ENCODE measurements at regions of chr12 and their contacts with region 1.

Region 1: GRCh38 chr12:120116792-120117651 is 469 bp upstream of the RAB35 start:
- DNase-seq: peak; percentile 98
- H3K4me3 Mint-ChIP-seq: peak overlapping the region; percentile 88
- H3K27ac Mint-ChIP-seq: peak overlapping the region; percentile 89
- H3K4me1 Mint-ChIP-seq: peaks cover 67% of the 10 kb centered on the region
- H3K27me3 Mint-ChIP-seq: no peaks in the 10 kb centered on the region

Region 2: DNA sequence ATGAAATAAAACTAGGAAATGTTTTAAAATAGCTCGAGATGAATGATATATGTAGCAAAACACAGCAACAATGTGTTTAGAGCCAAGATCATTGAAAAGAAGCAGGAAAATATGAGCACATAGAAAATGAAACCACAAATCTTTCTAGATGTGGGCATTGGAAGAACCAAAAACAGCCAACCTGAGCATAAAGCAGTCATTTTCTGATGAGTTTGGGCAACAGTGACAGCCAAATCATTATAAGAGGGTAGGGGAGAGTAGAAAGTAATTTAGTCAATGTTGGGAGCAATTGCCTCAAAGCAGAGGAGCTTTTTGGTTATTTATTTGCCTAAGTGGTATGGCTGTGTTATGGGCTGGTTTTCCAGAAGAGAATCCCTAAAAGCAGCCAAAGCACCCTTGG is 136.8 kb before region 1 on chr12:
- CTCF ChIA-PET with region 1: no interaction called
- POLR2A ChIA-PET with region 1: interaction called, 10 read pairs
- intact Hi-C with region 1: loop called (anchors 1 kb)
- DNase-seq: no peak
- H3K4me3 Mint-ChIP-seq: peak overlapping the region; percentile 53
- H3K27ac Mint-ChIP-seq: peak overlapping the region; percentile 82
- H3K4me1 Mint-ChIP-seq: peaks cover 20% of the 10 kb centered on the region
- H3K27me3 Mint-ChIP-seq: peaks cover 2% of the 10 kb centered on the region

Region 3: DNA sequence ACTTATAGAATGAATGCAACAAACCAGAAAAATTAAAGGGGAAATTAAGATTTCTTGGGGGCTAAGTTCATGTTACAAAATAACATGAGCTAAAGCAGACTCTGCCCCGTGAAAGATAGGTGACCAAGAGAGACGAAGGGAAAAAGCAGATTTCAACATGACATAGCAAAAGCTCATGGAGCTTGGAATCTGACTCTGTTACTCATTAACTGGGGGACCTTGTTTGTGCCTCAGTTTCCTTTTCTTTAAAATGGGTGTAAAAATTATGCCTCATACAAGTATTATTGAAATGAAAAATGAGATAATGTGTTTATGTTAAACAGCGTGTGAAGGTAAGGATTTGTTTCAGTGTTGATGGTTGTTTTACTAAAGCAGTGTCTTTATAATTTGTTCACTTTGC is 116.5 kb before region 1 on chr12:
- CTCF ChIA-PET with region 1: no interaction called
- POLR2A ChIA-PET with region 1: no interaction called
- intact Hi-C with region 1: no loop called
- DNase-seq: no peak
- H3K4me3 Mint-ChIP-seq: no peak overlapping the region
- H3K27ac Mint-ChIP-seq: no peak overlapping the region
- H3K4me1 Mint-ChIP-seq: peaks cover 58% of the 10 kb centered on the region
- H3K27me3 Mint-ChIP-seq: no peaks in the 10 kb centered on the region

Region 4: GRCh38 chr12:120012067-120012621 is 104.9 kb before region 1 on chr12:
- CTCF ChIA-PET with region 1: interaction called, 9 read pairs
- POLR2A ChIA-PET with region 1: interaction called, 14 read pairs
- intact Hi-C with region 1: loop called (anchors 1 kb)
- DNase-seq: peak; percentile 88
- H3K4me3 Mint-ChIP-seq: peak overlapping the region; percentile 70
- H3K27ac Mint-ChIP-seq: peak overlapping the region; percentile 96
- H3K4me1 Mint-ChIP-seq: peaks cover 88% of the 10 kb centered on the region
- H3K27me3 Mint-ChIP-seq: peaks cover 2% of the 10 kb centered on the region

Region 5: GRCh38 chr12:120194534-120195395 is 77.7 kb after region 1 on chr12 and contains the start of gene GCN1:
- CTCF ChIA-PET with region 1: interaction called, 14 read pairs
- POLR2A ChIA-PET with region 1: interaction called, 131 read pairs
- intact Hi-C with region 1: no loop called
- DNase-seq: peak; percentile 91
- H3K4me3 Mint-ChIP-seq: peak within 1 kb of the TSS; percentile 91
- H3K27ac Mint-ChIP-seq: peak within 1 kb of the TSS; percentile 98
- H3K4me1 Mint-ChIP-seq: peaks cover 51% of the 10 kb centered on the region
- H3K27me3 Mint-ChIP-seq: no peaks in the 10 kb centered on the region
- total RNA-seq, gene GCN1: 121 TPM

Region 6: DNA sequence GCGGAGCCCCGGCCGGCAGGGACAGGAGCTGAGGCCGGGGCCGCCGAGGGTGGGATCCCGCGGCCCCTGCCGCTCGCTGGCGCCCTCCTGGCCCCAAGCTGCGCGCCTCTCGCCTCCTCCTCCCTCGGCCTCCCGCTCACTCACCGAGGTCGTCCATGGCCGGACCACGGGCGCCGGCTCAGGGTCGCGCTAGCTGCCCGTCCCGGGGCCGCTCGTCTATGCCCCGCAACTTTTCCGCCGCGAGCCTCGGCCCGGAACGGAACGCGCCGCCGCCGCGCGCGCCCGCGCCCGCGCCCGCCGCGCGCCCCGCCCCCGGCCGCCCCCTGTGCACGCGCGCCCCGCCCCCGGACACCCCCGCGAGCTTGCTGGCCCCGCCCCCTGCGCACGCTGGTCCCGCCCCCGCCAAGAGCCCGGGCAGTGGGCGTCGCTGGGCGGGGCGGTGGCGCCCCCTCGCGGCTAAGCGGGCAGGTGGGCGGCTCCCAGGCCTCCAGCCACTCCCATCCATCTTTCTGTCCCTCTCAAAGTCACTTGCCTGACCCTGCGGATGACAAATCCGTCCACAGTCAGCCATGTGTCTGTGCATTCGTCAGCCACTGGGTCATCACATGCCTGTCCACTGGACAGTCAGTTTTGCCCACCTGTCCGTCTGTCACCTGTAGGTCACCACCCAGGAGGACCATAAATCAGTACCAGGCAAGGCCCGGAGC is 148.6 kb after region 1 on chr12 and contains the start of gene PXN:
- CTCF ChIA-PET with region 1: interaction called, 3 read pairs
- POLR2A ChIA-PET with region 1: no interaction called
- intact Hi-C with region 1: loop called (anchors 5 kb)
- DNase-seq: peak; percentile 92
- H3K4me3 Mint-ChIP-seq: peak within 1 kb of the TSS; percentile 80
- H3K27ac Mint-ChIP-seq: peak within 1 kb of the TSS; percentile 66
- H3K4me1 Mint-ChIP-seq: peaks cover 38% of the 10 kb centered on the region
- H3K27me3 Mint-ChIP-seq: no peaks in the 10 kb centered on the region
- total RNA-seq, gene PXN: 74.0 to 75.0 TPM

Measured in activated CD4-positive, alpha-beta memory T cell treated with anti-CD3 and anti-CD28 coated beads for 36 hours (primary cell).